H1 (cell line): ENCODE measurements at regions of chr6 and their contacts with region 1.

Region 1: DNA sequence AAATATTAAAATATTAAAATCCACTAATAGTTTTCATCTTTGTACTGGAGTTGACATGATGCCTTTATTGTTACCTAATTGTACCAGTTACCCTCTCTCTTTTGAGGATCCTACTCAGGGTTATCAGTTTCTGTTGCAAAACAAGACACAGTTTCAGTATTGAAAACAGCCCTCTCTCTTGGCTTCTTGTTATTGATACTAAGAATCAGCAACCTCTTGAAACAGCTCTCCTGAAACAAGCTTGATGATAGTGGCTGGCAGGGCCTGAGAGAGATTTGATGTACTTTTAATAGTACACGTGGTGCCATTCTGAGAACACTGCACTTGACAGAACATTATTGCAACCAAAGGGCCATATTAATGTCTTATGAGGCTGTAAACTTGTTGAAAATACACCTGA is 64.9 kb upstream of the MEI4 start:
- DNase-seq: no peak
- H3K4me3 ChIP-seq: no peak overlapping the region
- H3K27ac ChIP-seq: no peak overlapping the region
- H3K4me1 ChIP-seq: no peaks in the 10 kb centered on the region
- H3K27me3 ChIP-seq: no peaks in the 10 kb centered on the region
- CTCF ChIP-seq: no peak
- EP300 ChIP-seq: no peak
- POLR2A ChIP-seq: no peak
- RAD21 ChIP-seq: no peak

Region 2: DNA sequence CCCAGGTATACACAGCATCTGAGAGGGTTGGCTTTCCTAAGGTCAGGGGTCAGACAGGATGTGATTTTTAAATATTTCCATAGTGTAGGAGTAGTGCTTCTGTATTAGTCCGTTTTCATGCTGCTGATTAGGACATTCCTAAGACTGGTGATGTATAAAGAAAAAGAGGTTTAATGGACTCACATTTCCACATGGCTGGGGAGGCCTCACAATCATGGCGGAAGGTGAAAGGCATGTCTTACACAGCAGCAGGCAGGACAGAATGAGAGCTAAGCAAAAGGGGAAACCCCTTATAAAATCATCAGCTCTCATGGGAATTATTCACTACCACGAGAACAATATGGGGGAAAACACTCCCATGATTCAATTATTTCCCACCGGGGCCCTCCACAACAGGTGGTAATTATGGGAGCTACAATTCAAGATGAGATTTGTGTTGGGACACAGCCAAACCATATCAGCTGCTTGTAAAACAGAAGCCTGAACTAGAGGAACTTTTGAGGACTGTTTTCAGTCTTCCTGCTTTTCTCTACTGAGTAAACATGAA is 26.1 kb before region 1 on chr6:
- CTCF ChIA-PET with region 1: no interaction called
- POLR2A ChIA-PET with region 1: no interaction called
- DNase-seq: no peak
- H3K4me3 ChIP-seq: no peak overlapping the region
- H3K27ac ChIP-seq: no peak overlapping the region
- H3K4me1 ChIP-seq: no peaks in the 10 kb centered on the region
- H3K27me3 ChIP-seq: no peaks in the 10 kb centered on the region
- CTCF ChIP-seq: no peak
- EP300 ChIP-seq: no peak
- POLR2A ChIP-seq: no peak
- RAD21 ChIP-seq: no peak

Region 3: DNA sequence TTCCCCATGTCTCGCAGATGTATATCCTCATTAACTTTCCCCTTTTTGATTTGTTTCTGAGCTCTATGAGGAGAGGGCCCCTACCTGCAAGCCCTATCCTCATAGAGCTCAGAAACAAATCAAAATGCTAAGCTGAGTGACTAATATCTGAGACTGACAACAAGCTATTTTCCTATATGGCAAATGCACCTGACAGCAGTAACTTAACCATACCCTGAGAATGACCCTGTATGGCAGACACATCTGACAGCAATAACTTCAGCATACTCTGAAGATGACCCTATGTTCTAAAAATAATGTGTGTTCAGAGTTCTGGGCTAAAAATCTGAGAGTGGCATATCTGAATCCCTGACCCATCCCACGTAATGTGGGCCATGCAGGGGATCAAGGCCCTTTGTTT is 14.1 kb before region 1 on chr6:
- CTCF ChIA-PET with region 1: interaction called, 10 read pairs
- POLR2A ChIA-PET with region 1: no interaction called
- DNase-seq: no peak
- H3K4me3 ChIP-seq: no peak overlapping the region
- H3K27ac ChIP-seq: no peak overlapping the region
- H3K4me1 ChIP-seq: no peaks in the 10 kb centered on the region
- H3K27me3 ChIP-seq: no peaks in the 10 kb centered on the region
- CTCF ChIP-seq: no peak
- EP300 ChIP-seq: no peak
- POLR2A ChIP-seq: no peak
- RAD21 ChIP-seq: no peak

Region 4: DNA sequence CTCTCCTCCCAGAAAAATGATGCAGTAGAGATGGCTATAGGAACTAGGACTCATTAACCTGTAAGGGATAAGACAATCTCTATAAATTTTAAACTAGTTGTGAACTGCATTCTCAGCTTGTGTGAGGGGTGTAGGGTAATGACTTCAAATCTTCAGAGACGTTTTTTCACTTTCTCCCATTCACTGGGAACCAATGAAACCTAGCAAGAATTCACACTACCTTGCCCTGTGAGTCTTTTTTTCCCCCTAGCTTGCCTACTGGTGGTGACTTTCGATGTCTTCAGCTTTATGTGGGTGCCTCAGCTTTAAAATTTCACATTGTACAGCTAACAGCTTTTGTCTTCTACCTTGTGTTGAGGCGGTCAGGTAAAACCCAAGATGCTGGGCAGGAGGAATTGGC is 256.9 kb after region 1 on chr6:
- CTCF ChIA-PET with region 1: no interaction called
- POLR2A ChIA-PET with region 1: no interaction called
- DNase-seq: no peak
- H3K4me3 ChIP-seq: no peak overlapping the region
- H3K27ac ChIP-seq: no peak overlapping the region
- H3K4me1 ChIP-seq: no peaks in the 10 kb centered on the region
- H3K27me3 ChIP-seq: no peaks in the 10 kb centered on the region
- CTCF ChIP-seq: no peak
- EP300 ChIP-seq: no peak
- POLR2A ChIP-seq: no peak
- RAD21 ChIP-seq: no peak